Transverse colon (tissue), 4 donors: ENCODE measurements at regions of chr1 and their contacts with region 1.

Region 1: DNA sequence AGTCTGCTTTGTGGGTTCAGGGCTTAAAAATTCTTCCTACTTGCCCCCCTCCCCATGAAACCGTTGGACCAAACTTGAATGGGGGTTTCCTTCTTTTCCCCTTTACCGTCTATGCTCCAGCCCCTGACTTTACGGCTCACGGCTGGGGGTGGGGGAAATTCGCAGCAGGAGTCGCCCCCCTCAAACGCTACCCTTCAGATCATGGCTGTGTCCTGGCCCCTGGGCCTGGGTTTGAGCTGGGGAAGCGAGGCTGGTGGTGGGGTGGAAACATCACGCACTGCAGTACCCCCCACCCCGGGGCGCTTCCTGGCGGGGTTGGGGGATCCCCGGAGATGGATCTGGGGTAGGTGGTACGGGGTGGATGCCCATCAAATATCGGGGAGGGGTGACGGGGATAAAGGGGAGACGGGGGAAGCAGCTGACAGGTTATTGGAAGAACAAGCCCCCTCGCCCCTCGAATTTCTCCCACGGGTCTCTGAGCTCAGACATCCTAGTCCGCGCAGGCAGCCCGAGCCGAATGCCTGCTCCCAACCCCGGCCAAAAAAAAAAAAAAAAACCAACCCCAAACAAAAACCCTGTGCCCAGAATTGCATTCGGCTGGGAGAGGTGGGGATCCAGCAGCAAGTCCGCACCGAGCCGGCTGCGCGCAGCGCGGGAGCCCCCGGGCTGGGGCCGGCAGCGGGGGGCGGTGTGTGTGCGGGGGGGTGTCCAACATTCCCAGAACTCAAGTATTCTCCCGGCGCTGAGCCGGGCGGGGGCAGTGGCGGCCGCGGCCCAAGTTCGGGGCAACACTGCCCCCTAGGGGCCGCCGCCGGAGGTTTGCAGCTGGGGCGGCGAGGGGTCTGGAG is 59.0 kb upstream of the ACOT11 start:
- DNase-seq: peak; percentile 81
- H3K4me3 ChIP-seq: peak overlapping the region; percentile 50 to 73 (median 58)
- H3K27ac ChIP-seq: peak overlapping the region; percentile 92 to 97 (median 92)
- H3K4me1 ChIP-seq: peaks cover 20 to 42% (median 34%) of the 10 kb centered on the region in 4 donors
- H3K27me3 ChIP-seq: no peaks in the 10 kb centered on the region
- CTCF ChIP-seq: peak; percentile 94 to 99 (median 97)
- EP300 ChIP-seq: no peak
- POLR2A ChIP-seq: no peak

Region 2: DNA sequence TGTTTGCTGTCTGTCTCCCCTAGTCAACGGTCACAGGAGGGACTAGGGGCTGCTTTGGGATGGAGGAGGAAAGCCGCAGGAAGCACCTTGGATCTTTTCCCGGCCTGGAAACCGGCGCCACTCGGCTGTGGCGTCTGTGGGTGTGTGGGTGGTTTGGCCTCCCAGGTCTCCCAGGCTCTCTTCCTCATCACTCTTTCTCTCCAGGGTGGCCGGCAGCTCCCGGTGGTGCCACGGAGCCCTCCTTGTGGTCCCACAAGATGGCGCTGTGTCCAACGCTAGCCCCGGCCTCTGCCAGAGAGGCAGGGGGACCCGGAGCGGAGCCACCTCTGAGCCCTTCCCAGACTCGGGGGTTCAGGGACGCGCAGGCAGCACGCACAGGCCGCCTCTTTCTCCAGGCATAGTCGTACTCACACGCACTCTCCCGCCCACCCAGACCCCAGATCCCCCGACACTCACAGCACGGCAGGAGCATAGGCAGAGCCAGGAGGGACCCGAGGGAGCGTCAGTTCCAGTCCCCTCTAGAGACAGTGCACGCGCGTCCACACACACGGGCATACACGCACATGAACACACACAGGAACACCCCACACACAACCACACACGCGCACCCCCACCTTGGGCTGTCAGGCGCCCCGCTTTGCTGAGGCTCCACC is 367.4 kb before region 1 on chr1:
- in situ Hi-C with region 1: loop called in 3 of 4 experiments (anchors 5 to 25 kb)
- intact Hi-C with region 1: loop called (anchors 5 kb)
- DNase-seq: peak; percentile 85
- H3K4me3 ChIP-seq: peak overlapping the region in 3 of 4 donors; percentile 10 to 34 (median 23)
- H3K27ac ChIP-seq: no peak overlapping the region
- H3K4me1 ChIP-seq: peaks cover 5 to 29% (median 13%) of the 10 kb centered on the region in 4 donors
- H3K27me3 ChIP-seq: no peaks in the 10 kb centered on the region
- CTCF ChIP-seq: peak; percentile 67 to 80 (median 76)
- EP300 ChIP-seq: no peak
- POLR2A ChIP-seq: no peak

Region 3: GRCh38 chr1:54199765-54200518 is 289.1 kb before region 1 on chr1 and contains the starts of genes CYB5RL and MRPL37:
- in situ Hi-C with region 1: no loop called
- intact Hi-C with region 1: loop called (anchors 5 kb)
- DNase-seq: peak; percentile 94
- H3K4me3 ChIP-seq: peak within 1 kb of the TSS; percentile 84 to 97 (median 90)
- H3K27ac ChIP-seq: peak within 1 kb of the TSS; percentile 80 to 87 (median 82)
- H3K4me1 ChIP-seq: peaks cover 10 to 28% (median 23%) of the 10 kb centered on the region in 4 donors
- H3K27me3 ChIP-seq: no peaks in the 10 kb centered on the region
- CTCF ChIP-seq: no peak
- EP300 ChIP-seq: no peak
- POLR2A ChIP-seq: peak; percentile 55
- total RNA-seq, gene CYB5RL: 1.9 to 5.1 (median 3.6) TPM
- total RNA-seq, gene MRPL37: 9.7 to 122 (median 57.8) TPM

Region 4: GRCh38 chr1:54273092-54273794 is 215.8 kb before region 1 on chr1:
- in situ Hi-C with region 1: no loop called
- intact Hi-C with region 1: loop called (anchors 1 kb)
- DNase-seq: peak; percentile 61
- H3K4me3 ChIP-seq: no peak overlapping the region
- H3K27ac ChIP-seq: peak overlapping the region; percentile 88 to 94 (median 89)
- H3K4me1 ChIP-seq: peaks cover 50 to 79% (median 59%) of the 10 kb centered on the region in 4 donors
- H3K27me3 ChIP-seq: no peaks in the 10 kb centered on the region
- CTCF ChIP-seq: peak; percentile 30 to 42 (median 38)
- EP300 ChIP-seq: peak; percentile 31
- POLR2A ChIP-seq: no peak

Region 5: GRCh38 chr1:54406339-54407153 is 82.5 kb before region 1 on chr1 and contains the start of gene SSBP3:
- in situ Hi-C with region 1: loop called (anchors 5 to 10 kb)
- intact Hi-C with region 1: loop called (anchors 1 kb)
- DNase-seq: peak; percentile 95
- H3K4me3 ChIP-seq: peak within 1 kb of the TSS; percentile 93 to 99 (median 98)
- H3K27ac ChIP-seq: peak within 1 kb of the TSS; percentile 99 to 100 (median 99)
- H3K4me1 ChIP-seq: peaks cover 25 to 55% (median 50%) of the 10 kb centered on the region in 4 donors
- H3K27me3 ChIP-seq: no peaks in the 10 kb centered on the region
- CTCF ChIP-seq: peak in 1 of 5 experiments; percentile 31
- EP300 ChIP-seq: no peak
- POLR2A ChIP-seq: peak; percentile 69
- total RNA-seq, gene SSBP3: 28.7 to 162 (median 37.0) TPM

Region 6: DNA sequence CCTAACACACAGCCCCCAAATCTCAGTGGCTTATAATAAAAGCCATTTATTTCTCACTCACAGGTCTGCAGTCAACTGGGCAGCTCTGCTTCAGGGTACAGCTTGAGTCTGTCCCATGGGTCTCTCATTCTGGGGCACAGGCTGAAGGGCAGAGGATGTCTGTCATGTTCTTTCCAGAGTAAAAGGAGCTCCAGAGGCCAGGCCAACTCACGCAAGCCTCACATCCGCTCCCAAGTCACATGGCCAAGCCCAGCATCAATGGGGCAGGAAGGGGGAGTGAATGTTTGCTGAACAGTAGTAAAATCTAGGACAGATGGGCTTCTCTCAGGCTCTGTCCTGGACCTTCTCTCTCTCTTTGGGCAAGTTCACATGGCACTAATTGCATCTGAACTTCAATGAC is 75.7 kb before region 1 on chr1:
- in situ Hi-C with region 1: loop called (anchors 5 to 10 kb)
- intact Hi-C with region 1: no loop called
- DNase-seq: peak; percentile 57
- H3K4me3 ChIP-seq: no peak overlapping the region
- H3K27ac ChIP-seq: peak overlapping the region; percentile 1 to 38 (median 24)
- H3K4me1 ChIP-seq: peaks cover 18 to 44% (median 20%) of the 10 kb centered on the region in 4 donors
- H3K27me3 ChIP-seq: no peaks in the 10 kb centered on the region
- CTCF ChIP-seq: no peak
- EP300 ChIP-seq: no peak
- POLR2A ChIP-seq: no peak